ENCODE measurements at regions of chr19 and their contacts with region 1.

Region 1: GRCh38 chr19:2840794-2841790 is at the start of gene ZNF555:
- DNase-seq: peak; percentile 84
- H3K4me3 Mint-ChIP-seq: peak within 1 kb of the TSS; percentile 81
- H3K27ac Mint-ChIP-seq: no peak within 1 kb of the TSS
- H3K4me1 Mint-ChIP-seq: no peaks in the 10 kb centered on the region
- H3K27me3 Mint-ChIP-seq: peaks cover 12% of the 10 kb centered on the region
- total RNA-seq, gene ZNF555: 0.37 and 0.65 TPM in 2 replicates

Region 2: DNA sequence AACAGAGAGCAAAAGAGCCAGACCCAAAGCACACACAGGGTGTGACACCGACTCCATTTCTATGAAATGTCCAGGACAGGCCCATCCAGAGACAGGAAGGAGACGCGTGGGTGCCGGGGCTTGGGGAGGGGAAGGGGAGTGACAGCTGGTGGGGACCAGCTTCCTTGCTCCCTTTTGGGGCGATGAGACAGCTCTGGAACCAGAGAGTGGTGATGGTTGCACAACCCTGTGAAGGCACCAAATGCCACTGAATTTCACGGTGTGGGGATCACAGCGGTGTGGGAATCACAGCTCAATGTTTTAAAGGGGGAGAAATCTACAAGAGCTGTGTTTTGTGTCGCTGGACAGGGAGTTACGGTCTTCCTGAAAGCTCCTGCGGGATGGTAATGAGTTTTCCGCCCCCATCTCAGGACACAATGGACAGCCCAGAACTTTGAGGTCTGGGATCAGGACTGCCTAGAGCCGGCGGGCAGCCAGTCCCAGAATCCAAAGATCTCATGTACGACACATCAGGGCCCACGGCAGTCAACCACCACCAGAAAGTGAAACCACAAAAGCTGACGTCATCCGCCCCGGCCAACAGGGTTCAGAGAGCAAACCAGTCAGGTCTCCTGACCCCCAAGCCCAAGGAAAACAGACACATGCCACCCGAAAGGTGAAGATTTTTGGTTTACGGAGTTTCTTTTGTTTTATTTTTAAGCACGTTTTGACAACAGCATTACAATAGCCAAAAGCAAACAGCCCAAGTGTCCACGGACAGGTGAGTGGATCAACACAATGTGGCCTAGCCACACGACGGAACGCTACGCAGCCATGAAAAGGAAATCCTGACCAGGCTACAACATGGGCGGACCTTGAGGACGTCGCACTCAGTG is 65.3 kb before region 1 on chr19:
- intact Hi-C with region 1: no loop called
- DNase-seq: peak; percentile 71
- H3K4me3 Mint-ChIP-seq: peak overlapping the region; percentile 83
- H3K27ac Mint-ChIP-seq: peak overlapping the region; percentile 96
- H3K4me1 Mint-ChIP-seq: peaks cover 33% of the 10 kb centered on the region
- H3K27me3 Mint-ChIP-seq: no peaks in the 10 kb centered on the region

Region 3: DNA sequence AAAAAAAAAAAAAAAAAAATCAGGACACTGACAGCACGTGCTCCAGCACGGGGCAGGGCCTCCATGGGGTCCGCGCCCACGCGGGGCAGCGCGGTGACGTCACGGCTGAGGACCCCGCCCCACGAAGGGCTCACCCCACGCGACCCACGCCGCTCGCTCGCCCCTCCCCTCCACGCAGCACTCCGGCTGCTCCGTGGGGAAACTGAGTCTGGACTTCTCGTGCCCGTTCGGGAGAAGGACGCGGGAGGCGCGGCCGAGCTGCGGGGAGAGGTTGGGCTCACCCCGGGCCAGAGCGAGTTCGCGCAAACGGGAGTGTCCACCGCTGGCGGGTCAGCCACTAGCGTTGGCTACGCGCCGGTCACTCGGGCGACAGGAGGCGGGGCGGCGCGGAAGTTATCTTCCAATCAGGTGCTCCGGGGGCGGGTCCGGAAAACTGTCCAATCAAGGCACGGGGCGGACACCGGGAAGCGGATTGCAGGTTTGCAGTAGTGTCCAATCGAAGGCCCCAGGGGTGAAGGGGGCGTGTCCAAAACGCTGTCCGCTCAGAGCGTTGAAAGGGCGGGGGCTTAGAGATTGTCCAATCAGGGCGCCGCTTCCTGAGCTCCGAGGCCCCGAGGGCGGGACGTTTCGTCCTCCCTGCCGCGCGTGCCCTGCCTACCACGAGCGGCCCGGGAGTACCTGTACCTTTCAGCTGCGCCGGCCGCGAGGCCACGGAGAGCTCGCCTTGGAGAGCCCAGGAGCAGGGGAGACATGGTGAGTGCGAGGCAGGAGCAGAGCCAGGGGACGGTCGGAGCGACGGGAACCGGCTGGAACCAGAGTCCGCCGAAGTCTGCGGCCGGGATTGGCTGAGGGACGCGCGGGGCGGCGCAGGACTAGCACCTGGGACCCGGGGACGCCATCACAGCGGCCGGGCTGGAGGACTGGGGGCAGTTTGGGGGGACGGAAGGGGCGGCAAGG is 59.5 kb after region 1 on chr19 and contains the start of gene ZNF57:
- intact Hi-C with region 1: loop called (anchors 1 kb)
- DNase-seq: peak; percentile 87
- H3K4me3 Mint-ChIP-seq: peak within 1 kb of the TSS; percentile 93
- H3K27ac Mint-ChIP-seq: peak within 1 kb of the TSS; percentile 85
- H3K4me1 Mint-ChIP-seq: peaks cover 4% of the 10 kb centered on the region
- H3K27me3 Mint-ChIP-seq: no peaks in the 10 kb centered on the region
- total RNA-seq, gene ZNF57: 2.2 and 2.6 TPM in 2 replicates

Measured in activated T-helper 1 cell treated with anti-CD3 and anti-CD28 coated beads, Interleukin-12 subunit alpha, Interleukin-12 subunit beta, Interleukin-2, Interleukin-4 antibody, amounts not matched to agents 30 ng/mL and 10 ng/mL and 1 ng/mL, durations not matched to agents 14 hours and 24 hours and 36 hours (primary cell).